Activated T-helper 2 cell treated with anti-CD3 and anti-CD28 coated beads, Interferon-gamma antibody, Interleukin-2, Interleukin-4, amounts not matched to agents 10 μg/mL and 5 μg/mL and 100 μg/mL, durations not matched to agents 14 hours and 24 hours and 36 hours (primary cell): ENCODE measurements at regions of chr6 and their contacts with region 1.

Region 1: DNA sequence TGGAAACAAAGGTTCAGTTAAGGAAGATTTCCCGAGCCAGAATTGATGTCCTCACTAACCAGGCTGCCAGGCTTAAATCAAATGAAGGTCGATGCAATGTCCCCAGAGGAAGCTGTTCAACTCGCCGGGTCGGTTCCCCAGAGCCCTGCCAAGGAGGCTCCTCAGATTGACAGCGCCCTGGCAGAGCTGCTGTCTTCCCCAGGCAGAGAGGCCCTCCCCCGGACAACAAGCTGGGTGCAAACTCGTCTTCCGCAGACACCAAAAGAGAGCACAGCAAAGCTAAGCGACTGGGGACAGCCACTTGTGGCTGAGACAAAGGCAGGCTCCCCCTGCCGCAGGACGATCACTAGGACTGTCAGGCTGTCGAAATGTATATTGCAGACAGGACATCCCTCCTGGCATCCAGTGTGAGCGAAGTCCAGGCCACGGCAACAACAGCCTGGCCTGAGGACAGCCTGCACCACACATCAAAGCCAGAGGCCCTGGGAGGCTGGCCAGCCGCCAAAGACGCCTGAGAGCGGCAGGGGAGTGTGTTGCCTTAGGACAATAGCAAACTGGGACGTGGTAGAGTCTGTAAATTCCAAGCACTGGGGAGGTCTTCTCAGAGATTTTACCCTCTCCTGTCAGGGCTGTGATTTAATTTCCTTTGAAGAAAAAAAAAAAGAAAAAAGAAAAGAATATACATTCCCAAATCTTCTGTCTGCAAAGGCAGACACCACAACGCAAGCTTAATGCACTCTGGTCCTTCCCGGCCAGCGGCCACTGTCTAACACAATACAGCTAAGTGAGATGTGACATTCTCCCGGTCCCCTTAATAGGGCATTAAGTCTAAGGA is 99.1 kb downstream of the HIVEP2 start:
- DNase-seq: peak; percentile 35
- H3K4me3 Mint-ChIP-seq: peak overlapping the region; percentile 60
- H3K27ac Mint-ChIP-seq: peak overlapping the region; percentile 62
- H3K4me1 Mint-ChIP-seq: peaks cover 89% of the 10 kb centered on the region
- H3K27me3 Mint-ChIP-seq: no peaks in the 10 kb centered on the region

Region 2: GRCh38 chr6:142692942-142693341 is 152.9 kb before region 1 on chr6:
- intact Hi-C with region 1: loop called (anchors 10 kb)
- DNase-seq: peak; percentile 28
- H3K4me3 Mint-ChIP-seq: no peak overlapping the region
- H3K27ac Mint-ChIP-seq: no peak overlapping the region
- H3K4me1 Mint-ChIP-seq: peaks cover 16% of the 10 kb centered on the region
- H3K27me3 Mint-ChIP-seq: no peaks in the 10 kb centered on the region

Region 3: DNA sequence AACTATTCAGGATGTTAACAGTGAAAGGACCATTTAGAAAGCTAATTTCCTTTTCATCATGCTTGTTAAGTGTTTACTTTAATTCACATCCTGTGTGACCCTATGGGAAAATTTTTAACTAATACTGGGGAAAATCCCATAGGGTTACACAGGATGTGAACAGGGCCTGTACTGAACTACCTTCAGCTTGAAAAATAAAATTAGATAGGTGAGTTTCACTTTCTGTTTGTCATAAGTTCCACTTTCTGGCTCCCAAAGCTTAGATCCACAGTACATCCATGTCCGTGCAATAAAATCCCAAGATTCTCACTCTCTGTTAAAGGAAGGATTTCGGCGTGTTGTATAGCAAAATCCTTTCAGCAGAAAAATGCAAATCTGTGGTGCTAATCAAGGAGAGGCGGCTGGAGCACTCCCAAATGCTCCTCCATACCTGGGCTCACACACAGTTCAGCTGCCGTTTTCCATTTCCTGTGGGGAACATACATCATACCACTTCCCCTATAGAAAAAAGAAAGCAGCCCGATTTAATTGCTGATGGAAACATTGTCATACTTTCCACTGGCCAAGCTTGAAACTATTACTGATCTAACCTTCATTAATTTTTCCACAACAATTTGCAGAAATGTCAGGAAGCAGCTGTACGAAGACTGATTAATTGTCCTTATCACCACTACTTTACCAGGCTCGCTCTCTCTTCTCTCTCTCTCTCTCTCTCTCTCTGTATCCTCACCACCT is 26.1 kb before region 1 on chr6:
- intact Hi-C with region 1: loop called (anchors 1 kb)
- DNase-seq: peak; percentile 55
- H3K4me3 Mint-ChIP-seq: peak overlapping the region; percentile 76
- H3K27ac Mint-ChIP-seq: peak overlapping the region; percentile 91
- H3K4me1 Mint-ChIP-seq: peaks cover 57% of the 10 kb centered on the region
- H3K27me3 Mint-ChIP-seq: no peaks in the 10 kb centered on the region

Region 4: DNA sequence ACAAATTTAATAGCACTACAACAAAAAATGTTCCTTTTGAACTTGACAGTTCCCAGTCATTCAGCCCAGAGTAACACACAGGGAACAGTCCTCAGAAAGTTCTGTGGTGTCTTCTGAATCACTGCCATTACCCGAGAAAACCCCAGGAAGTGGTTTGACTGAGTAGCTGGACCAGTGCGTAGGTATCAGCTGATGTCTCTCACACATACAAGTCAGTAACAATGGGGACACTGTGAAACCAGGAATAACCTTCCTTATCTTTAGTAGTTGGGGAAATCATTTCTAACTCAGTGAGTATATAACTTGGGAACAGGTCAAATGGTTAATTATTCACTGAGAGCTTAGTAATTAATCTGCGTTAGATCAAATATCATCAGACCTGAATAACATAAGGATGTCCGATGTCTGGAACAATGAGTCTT is 26.1 kb after region 1 on chr6:
- intact Hi-C with region 1: loop called (anchors 1 kb)
- DNase-seq: peak; percentile 33
- H3K4me3 Mint-ChIP-seq: peak overlapping the region; percentile 57
- H3K27ac Mint-ChIP-seq: peak overlapping the region; percentile 75
- H3K4me1 Mint-ChIP-seq: peaks cover 71% of the 10 kb centered on the region
- H3K27me3 Mint-ChIP-seq: no peaks in the 10 kb centered on the region

Region 5: GRCh38 chr6:142902636-142903053 is 56.8 kb after region 1 on chr6:
- intact Hi-C with region 1: loop called (anchors 1 kb)
- DNase-seq: peak; percentile 64
- H3K4me3 Mint-ChIP-seq: peak overlapping the region; percentile 53
- H3K27ac Mint-ChIP-seq: peak overlapping the region; percentile 84
- H3K4me1 Mint-ChIP-seq: peaks cover 60% of the 10 kb centered on the region
- H3K27me3 Mint-ChIP-seq: no peaks in the 10 kb centered on the region

Region 6: GRCh38 chr6:142926494-142927270 is 80.8 kb after region 1 on chr6:
- intact Hi-C with region 1: loop called (anchors 5 kb)
- DNase-seq: peak; percentile 69
- H3K4me3 Mint-ChIP-seq: peak overlapping the region; percentile 91
- H3K27ac Mint-ChIP-seq: peak overlapping the region; percentile 90
- H3K4me1 Mint-ChIP-seq: peaks cover 43% of the 10 kb centered on the region
- H3K27me3 Mint-ChIP-seq: no peaks in the 10 kb centered on the region